ENCODE measurements at regions of chr4 and their contacts with region 1.

Region 1: DNA sequence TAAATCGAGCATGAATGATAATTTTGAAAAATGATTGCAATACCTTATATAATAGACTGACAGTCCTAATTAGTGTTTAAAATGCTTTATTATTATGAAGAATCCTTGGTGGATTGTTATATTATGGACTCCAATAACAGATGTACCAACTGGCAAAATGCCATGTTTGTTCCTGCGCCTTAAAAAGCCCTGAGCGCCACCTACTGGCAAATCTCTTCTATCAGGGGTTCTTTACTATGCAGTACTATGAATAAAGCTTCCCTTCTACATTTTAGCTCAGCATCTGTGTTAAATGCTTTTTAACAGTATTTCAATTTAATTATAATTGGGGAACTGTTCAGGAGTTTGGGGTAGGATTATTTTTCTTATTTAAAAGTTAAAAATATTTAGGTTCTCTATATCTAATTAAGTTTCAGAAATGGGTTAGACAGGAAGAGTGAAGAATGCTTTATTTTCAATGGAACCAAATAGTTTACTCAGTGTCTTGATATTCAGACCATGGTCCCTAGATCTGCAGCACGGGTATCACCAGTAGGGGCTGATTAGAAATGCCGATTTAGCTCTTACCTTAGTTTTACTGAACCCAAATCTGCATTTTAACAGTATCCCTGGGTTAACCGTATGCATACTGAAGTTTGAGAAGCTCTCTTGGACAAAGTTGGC is 20.1 kb downstream of the CFAP97 start:
- DNase-seq: peak; percentile 90
- H3K4me3 ChIP-seq: no peak overlapping the region
- H3K27ac ChIP-seq: no peak overlapping the region
- H3K4me1 ChIP-seq: no peaks in the 10 kb centered on the region
- H3K27me3 ChIP-seq: no peaks in the 10 kb centered on the region
- CTCF ChIP-seq: peak; percentile 87

Region 2: DNA sequence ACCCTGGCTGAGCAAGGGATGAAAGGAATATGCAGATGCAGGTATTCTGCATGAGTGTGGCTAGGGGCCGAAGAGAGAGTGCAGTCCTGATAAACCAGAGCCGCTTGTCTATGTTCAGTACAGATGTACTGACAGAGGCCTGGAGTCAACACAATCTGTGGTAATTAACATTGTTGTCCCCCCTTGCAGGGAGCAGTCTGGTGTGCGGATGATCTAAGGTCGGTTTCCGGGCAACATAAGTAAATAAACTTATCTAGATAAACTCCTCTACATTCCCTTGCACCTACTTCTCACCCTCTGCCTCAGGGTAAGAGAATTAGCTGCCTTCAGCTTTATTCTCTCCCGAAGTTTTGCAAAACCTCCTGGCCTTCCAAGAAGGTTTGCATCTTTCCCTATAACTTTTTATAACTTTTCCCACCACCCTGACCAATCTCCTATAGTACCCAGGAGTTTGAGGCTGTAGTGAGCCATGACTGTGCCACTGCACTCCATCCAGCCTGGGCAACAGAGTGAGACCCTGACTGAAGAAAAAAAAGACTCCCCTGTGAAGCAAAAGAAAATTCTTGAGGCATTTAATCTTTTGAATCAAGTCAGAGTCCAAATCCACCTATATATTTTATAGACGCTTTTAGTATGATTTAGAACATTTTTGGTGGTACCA is 52.2 kb after region 1 on chr4:
- intact Hi-C with region 1: no loop called
- DNase-seq: no peak
- H3K4me3 ChIP-seq: no peak overlapping the region
- H3K27ac ChIP-seq: no peak overlapping the region
- H3K4me1 ChIP-seq: no peaks in the 10 kb centered on the region
- H3K27me3 ChIP-seq: no peaks in the 10 kb centered on the region
- CTCF ChIP-seq: no peak

Region 3: DNA sequence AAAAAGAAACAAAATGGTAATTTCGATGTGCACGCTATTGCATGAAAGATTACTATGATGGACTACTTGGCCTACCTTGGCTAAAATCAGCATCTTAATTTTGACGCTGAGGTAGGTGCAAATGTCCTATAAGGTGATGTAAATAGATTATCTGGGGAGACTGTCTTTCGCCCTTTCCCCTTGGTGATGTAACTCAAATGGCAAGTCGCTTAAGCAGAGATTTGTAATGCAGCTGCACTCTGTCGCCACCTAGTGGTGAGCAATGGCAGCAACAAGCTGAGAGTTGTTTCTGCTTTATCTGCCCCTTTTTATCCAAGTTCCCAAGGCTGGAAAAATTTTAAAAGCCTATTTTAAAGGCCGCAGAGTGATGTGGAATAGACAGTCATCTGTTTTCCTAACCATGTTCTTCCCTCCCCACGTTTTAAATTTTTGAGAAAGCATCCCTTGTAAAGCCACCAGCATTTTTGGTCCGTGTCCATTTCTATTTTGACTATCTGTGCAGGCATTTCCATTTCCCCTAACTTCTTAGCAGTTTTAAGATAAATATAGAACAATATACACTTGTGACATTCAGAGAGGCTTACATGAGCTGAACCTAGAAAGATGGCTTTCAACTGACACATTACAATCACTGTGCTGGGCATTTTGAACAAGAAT is 413.9 kb after region 1 on chr4:
- intact Hi-C with region 1: loop called (anchors 10 kb)
- DNase-seq: peak; percentile 73
- H3K4me3 ChIP-seq: no peak overlapping the region
- H3K27ac ChIP-seq: no peak overlapping the region
- H3K4me1 ChIP-seq: no peaks in the 10 kb centered on the region
- H3K27me3 ChIP-seq: no peaks in the 10 kb centered on the region
- CTCF ChIP-seq: peak; percentile 100